ENCODE measurements at regions of chr11 and their contacts with region 1.

Region 1: GRCh38 chr11:34791780-34792542 is 124.2 kb downstream of the APIP start:
- DNase-seq: no peak
- H3K4me3 ChIP-seq: no peak overlapping the region
- CTCF ChIP-seq: no peak

Region 2: DNA sequence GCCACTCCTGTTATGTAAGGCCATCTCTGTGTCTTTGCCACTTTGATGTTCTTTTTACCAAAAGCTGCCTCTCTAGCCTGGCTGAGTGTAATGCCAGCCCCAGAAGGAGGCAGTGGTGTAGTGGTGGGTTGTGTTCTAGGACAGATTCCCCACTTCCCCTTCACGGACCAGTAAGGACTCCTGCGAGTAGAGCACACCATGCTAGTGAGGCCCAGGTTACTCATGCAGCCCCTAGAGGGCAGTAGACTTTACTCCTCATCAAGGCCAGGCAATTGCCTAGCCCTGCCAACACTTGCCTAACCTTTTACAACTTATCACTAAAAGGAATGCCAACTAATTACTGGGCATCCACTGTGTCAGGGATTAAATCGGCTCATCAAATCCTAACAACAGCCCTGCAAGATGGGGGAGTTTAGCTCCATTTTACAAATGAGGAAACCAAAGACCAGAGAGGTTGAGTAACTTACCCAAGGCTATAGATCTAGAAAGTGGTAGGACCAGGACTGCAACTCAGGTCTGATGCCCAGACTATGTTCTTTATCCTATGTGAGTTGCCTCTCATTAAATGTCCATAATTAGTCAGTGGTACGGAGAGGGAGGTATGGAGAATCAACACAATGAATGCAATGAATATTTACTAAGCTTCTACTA is 48.9 kb after region 1 on chr11:
- in situ Hi-C with region 1: loop called (anchors 5 kb)
- DNase-seq: no peak
- H3K4me3 ChIP-seq: no peak overlapping the region
- CTCF ChIP-seq: peak; percentile 39

Region 3: DNA sequence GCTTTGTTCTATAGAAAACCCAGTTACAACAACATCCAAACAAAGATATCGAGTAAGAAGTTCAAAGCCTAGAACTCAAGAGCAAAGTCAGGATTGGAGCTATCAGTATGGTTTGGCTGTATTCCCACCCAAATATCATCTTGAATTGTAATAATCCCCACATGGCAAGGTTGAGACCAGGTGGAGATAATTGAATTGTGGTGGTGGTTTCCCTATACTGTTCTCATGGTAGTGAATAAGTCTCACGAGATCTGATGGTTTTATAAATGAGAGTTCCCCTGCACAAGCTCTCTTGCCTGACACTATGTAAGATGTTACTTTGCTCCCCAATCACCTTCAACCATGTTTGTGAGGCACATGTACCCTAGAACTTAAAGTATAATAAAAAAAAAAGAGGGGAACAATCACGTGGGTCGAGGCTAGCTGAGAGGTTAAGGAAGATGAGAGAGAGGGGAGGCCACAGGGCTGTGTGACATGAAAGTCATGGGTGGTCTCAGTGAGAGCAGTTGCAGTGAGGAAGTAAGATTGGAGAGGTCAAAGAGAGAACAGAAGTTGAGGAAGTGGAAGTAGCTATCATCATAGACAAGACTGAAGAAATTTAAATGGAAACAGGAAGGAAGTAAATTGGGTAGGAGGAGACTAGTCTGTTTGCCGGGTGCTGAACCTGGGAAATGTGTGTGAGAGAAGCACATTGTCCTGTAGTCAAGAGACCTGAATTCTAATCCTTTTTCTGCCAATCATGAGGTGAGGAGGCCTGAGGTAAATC is 266.9 kb after region 1 on chr11:
- in situ Hi-C with region 1: no loop called
- DNase-seq: no peak
- H3K4me3 ChIP-seq: no peak overlapping the region
- CTCF ChIP-seq: no peak

Measured in astrocyte of the cerebellum (primary cell).